A549 (cell line): ENCODE measurements at regions of chr2 and their contacts with region 1.

Region 1: DNA sequence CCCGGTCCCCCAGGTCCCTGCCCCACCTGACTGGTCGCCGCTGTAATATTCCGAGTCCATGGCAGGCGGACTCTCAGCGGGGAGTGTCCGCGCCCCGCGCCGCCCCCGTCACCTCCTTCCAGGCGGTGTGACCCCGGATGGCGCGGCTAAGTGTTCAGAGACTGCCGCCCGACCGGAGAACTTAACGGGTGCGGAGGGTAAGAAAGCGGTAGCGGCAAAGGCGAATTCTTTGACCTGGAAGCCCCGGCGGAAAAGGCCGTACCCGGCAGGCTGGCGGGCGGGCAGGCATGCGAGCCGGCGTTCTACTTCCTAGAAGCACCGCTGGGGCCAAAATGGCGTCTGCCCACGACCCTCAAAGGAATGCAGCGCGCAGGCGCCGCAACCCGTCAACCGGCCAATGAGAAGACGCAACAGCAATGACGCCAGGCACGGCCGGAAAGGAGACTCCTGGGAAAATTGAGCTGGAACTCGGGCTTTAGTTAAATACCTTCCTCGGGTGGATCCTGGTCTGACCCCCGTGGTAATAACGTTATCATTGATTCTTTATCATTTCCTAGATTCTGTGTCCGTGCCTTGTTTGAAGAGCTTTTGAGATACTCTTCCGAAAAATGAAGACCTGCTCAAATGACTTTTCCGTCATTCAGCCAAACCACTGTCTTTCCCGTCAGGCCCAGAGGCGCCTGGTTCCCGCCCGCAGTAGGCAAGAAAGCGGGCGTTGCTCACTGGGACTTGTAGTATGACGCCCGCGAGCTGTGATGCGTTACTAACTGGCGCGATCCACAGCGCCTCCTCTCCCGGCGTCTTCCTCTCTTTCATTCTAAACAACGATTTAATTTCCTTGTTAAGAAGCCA is at the start of gene IWS1:
- DNase-seq: peak; percentile 89 to 97
- ATAC-seq: peak; percentile 96 to 97
- H3K4me3 ChIP-seq: peak within 1 kb of the TSS; percentile 99
- H3K27ac ChIP-seq: peak within 1 kb of the TSS; percentile 96 to 100
- H3K4me1 ChIP-seq: peaks cover 27% of the 10 kb centered on the region
- CTCF ChIP-seq: peak; percentile 28; the same call in 1 of the 3 replicates
- EP300 ChIP-seq: no peak
- POLR2A ChIP-seq: peak; percentile 49; the same call in 1 of the 2 replicates
- RAD21 ChIP-seq: peak in 1 of 2 experiments; percentile 22; a peak in 1 of 5 replicates
- polyA plus RNA-seq, gene IWS1: 57.2 and 69.1 TPM in 2 replicates

Region 2: GRCh38 chr2:127508631-127509034 is 17.7 kb before region 1 on chr2:
- CTCF ChIA-PET with region 1: interaction called, 3 read pairs
- POLR2A ChIA-PET with region 1: interaction called, 25 read pairs
- DNase-seq: peak; percentile 87 to 91
- ATAC-seq: peak; percentile 92
- H3K4me3 ChIP-seq: 0 out of 3 replicates have a peak overlapping the region, but pooled peaks have one; percentile 10
- H3K27ac ChIP-seq: peak overlapping the region; percentile 68 to 81; a peak in 5 of 6 replicates
- H3K4me1 ChIP-seq: peaks cover 64% of the 10 kb centered on the region
- CTCF ChIP-seq: no peak
- EP300 ChIP-seq: no peak
- POLR2A ChIP-seq: no peak
- RAD21 ChIP-seq: no peak; a peak in 1 of 5 replicates

Region 3: DNA sequence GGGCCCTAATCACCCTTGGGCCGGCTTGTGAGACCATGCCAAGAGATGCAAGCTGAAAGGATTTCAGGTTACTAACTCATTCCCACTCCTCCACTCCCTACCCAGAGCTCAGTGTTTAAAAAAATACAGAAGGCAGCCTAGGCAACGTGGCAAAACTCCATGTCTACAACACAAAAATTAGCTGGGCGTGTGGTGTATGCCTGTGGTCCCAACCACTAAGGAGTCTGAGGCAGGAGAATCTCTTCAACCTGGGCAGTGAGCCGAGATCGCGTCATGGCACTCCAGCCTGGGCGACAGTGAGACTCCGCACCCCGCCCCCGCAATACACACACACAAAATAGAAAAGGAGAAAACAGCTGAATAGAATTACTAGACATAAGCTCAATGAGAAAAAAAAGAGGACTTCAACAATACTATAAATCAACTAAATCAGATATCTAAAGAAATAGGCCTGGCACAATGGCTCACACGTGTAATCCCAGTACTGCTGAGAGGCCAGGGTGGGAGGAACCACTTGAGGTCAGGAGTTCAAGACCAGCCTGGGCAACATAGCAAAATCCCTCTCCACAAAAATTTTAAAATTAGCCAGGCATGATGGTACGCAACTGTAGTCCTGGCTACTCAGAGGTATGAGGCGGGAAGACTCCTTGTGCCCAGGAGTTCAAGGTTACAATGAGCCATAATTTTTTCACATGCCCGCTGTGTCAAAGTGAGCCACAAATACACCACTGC is 10.2 kb before region 1 on chr2:
- CTCF ChIA-PET with region 1: no interaction called
- POLR2A ChIA-PET with region 1: interaction called, 11 read pairs
- DNase-seq: no peak
- ATAC-seq: no peak
- H3K4me3 ChIP-seq: no peak overlapping the region
- H3K27ac ChIP-seq: no peak overlapping the region
- H3K4me1 ChIP-seq: peaks cover 19% of the 10 kb centered on the region; the same call in 2 of the 3 replicates
- CTCF ChIP-seq: no peak
- EP300 ChIP-seq: no peak
- POLR2A ChIP-seq: no peak
- RAD21 ChIP-seq: no peak